OCI-LY7 (cell line): ENCODE measurements at regions of chr16 and their contacts with region 1.

Region 1: DNA sequence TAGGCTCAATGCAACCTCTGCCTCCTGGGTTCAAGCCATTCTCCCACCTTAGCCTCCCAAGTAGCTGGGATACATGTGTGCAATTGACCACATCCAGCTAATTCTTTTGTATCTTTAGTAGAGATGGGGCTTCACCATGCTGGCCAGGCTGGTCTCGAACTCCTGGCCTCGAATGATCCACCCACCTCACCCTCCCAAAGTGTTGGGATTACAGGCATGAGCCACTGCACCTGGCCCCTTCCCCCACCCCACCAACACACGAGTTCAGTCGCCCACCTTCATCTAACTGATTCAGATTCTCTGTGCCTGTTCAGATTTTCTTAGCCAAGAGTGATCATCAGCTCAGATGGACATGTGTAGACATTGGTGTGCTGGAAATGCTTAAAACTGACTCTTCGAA is 25.0 kb upstream of the METTL9 start:
- DNase-seq: no peak
- H3K4me3 ChIP-seq: no peak overlapping the region
- H3K27ac ChIP-seq: no peak overlapping the region
- H3K4me1 ChIP-seq: peaks cover 4% of the 10 kb centered on the region
- CTCF ChIP-seq: no peak

Region 2: DNA sequence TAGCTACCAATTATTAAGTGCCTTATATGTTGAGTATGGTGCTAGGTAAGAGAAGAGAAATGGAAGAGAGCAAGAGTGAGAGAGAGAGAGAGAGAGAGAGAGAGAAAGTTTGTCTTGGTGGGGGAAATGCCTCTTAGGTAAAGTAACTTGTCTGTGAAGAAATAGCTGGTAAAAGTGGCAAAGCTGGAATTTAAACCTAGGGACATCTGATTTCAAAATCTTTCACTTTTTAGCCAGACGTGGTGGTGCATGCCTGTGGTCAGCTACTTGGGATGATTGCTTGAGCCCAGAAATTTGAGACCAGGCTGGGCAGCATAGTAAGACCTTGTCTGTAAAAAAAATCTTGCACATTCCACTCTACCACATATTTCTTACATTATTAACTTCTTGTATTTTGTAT is 823.1 kb after region 1 on chr16:
- CTCF ChIA-PET with region 1: no interaction called
- POLR2A ChIA-PET with region 1: no interaction called
- intact Hi-C with region 1: loop called (anchors 10 kb)
- DNase-seq: no peak
- H3K4me3 ChIP-seq: no peak overlapping the region
- H3K27ac ChIP-seq: no peak overlapping the region
- H3K4me1 ChIP-seq: peaks cover 7% of the 10 kb centered on the region
- CTCF ChIP-seq: no peak